Lower leg skin (tissue), 4 donors: ENCODE measurements at regions of chr1 and their contacts with region 1.

Region 1: DNA sequence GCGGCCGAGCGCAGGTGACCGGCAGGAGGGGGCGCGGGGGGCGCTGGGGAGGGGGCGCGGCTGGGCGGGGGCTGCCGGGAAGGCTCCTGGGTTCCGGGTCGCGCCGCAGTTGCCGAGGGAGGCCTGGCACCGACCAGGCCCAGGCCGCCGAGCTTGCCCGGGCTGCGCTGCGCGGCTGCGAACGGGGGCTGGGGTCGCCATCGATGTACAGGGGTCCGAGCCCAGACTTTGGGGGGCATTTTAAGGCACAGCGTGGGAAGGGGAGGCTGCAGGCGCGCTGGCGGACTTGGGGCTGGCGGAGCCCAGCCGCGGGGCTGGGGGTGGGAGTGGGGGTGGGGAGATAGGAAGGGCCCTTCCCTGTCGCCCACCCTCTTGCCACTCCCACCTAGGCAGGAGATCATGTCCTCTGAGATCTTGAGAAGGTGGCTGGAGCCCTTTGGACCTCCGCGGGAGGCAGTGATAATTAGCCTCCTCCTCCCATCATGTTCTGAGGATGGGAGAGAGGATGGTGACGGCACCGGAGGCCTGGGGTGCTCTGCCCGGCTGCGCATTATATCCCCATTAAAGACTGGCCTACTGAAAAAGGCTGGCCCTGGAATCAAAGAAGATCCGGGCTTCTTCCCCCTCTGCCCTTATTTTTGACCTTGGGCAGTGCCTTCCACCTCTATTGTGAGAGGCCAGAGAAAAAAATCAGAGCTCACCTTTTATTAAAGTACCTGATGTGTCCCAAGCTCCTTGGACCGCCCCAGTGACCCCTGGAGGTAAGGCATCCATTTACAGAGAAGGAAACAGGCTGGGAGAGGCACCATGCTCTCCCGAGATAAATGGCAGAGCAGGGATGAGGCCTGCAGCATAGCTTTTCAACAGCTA is 497 bp downstream of the FBXO44 start:
- DNase-seq: no peak
- H3K4me3 ChIP-seq: peak overlapping the region; percentile 45
- CTCF ChIP-seq: no peak
- POLR2A ChIP-seq: no peak

Region 2: DNA sequence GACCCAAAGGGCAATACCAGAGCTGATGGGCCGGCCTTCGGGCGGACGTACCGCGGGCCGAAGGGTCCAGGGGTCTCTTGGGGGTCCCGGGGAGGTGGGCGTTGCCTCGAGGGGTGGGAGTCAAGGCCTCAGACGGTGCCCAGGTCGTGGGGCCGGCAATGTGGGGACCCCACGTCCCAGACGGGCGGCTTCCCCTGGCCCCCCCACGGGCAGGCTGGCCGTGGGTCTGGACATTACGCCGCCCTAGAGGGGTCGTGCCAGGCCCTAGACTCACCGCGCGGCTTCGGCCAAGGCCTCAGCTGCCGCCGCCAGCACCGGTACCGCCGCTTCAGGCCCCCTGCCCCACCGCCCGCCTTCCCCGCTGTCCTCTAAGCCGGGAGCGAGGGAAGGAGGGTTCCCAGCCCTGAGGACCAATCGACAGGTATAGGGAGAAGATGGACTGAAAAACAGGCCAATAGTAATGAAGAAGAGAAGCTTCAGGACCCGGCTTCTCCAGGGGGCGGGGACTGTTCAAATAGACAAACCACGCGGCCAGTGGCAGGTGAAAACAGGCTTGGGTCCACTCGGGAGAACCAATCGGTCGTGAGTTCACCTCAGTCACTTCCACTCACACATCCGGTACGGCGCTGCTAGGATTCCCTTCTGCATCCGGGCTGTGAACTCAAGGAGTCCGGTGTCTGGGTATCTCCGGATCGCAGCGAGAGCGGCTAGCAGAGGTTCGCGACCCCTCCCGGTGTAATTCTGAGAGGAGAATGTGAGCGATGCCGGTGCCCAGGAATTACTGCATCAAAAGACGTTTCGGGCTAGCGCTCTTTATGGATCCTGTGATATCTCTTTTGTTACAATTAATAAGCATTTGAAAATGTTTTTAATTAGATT is 392.8 kb before region 1 on chr1 and contains the start of gene MTOR:
- intact Hi-C with region 1: no loop called
- DNase-seq: peak; percentile 99
- H3K4me3 ChIP-seq: peak within 1 kb of the TSS; percentile 73
- CTCF ChIP-seq: no peak
- POLR2A ChIP-seq: no peak
- total RNA-seq, gene MTOR: 28.7 to 31.5 (median 29.7) TPM

Region 3: GRCh38 chr1:11671544-11672286 is 16.5 kb after region 1 on chr1:
- intact Hi-C with region 1: no loop called
- DNase-seq: no peak
- H3K4me3 ChIP-seq: no peak overlapping the region
- CTCF ChIP-seq: no peak
- POLR2A ChIP-seq: no peak

Region 4: DNA sequence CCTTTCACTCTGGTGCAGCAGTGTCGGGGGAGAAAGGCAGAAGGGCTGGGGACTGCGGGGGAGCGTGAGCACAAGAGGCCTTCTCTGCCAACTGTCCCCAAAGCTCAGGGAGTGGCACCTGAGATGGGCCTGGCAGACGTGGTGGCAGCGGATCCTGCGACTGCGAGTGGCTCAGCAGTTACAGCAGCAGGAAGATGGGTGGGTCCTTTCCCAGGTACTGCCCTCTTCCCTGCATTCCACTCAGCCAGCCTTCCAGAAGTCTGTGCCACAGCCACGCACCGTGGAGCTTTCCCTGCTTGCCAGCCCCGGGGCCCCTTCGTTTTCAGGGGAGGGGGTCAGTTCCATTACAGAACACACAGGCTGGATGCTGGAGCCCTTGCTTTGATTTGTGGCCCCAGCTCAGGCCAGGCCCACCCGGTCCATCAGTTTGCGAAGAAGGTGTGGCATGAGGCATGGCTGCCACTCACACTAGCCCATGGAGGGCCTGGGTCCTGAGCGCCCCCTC is 133.4 kb after region 1 on chr1:
- intact Hi-C with region 1: loop called (anchors 1 kb)
- DNase-seq: no peak
- H3K4me3 ChIP-seq: no peak overlapping the region
- CTCF ChIP-seq: no peak
- POLR2A ChIP-seq: no peak

Region 5: GRCh38 chr1:11862890-11863289 is 207.7 kb after region 1 on chr1:
- intact Hi-C with region 1: no loop called
- DNase-seq: no peak
- H3K4me3 ChIP-seq: no peak overlapping the region
- CTCF ChIP-seq: no peak
- POLR2A ChIP-seq: no peak